ENCODE measurements at regions of chr4 and their contacts with region 1.

Region 1: DNA sequence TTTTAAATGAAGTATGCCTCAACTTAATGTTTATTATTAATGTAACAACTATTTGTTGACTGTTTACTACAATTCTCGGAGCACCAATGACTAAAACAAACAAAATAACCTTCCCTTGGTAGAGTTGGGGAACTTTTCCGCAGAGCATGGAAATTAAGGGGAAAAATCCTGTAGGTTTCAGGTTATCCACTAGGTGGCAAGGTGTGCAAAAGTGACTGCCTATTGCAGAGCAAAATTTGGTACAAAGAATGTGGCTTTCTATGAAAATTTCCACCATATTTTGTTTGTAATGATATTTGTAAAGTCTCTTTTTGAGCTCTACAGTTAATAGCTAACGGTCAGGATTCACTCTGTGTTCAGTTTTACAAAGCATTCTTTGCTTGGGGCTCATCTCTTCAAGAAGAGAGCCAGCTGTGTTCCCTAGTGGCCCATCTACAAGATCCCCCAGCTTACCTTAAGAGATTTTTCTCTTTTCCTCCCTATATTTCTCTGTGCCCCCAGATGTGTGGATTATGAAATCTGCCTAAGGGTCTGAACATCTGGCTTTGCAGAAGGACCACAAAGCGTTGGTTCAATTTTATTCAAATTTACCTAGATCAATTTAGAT is 61.1 kb downstream of the FBXO8 start:
- DNase-seq: peak; percentile 13
- ATAC-seq: peak; percentile 89
- H3K4me3 ChIP-seq: no peak overlapping the region
- H3K27ac ChIP-seq: no peak overlapping the region
- H3K4me1 ChIP-seq: no peaks in the 10 kb centered on the region
- H3K27me3 ChIP-seq: no peaks in the 10 kb centered on the region
- CTCF ChIP-seq: peak; percentile 26 to 70 (median 63); a peak in 5 of 6 replicates
- POLR2A ChIP-seq: no peak
- RAD21 ChIP-seq: peak; percentile 53

Region 2: GRCh38 chr4:174318829-174319764 is 96.7 kb after region 1 on chr4:
- CTCF ChIA-PET with region 1: interaction called, 3 read pairs
- POLR2A ChIA-PET with region 1: no interaction called
- RAD21 ChIA-PET with region 1: no interaction called
- intact Hi-C with region 1: loop called (anchors 1 kb)
- DNase-seq: peak; percentile 22
- ATAC-seq: no peak
- H3K4me3 ChIP-seq: no peak overlapping the region
- H3K27ac ChIP-seq: no peak overlapping the region
- H3K4me1 ChIP-seq: no peaks in the 10 kb centered on the region
- H3K27me3 ChIP-seq: no peaks in the 10 kb centered on the region
- CTCF ChIP-seq: peak; percentile 51 to 77 (median 51); a peak in 4 of 6 replicates
- POLR2A ChIP-seq: no peak
- RAD21 ChIP-seq: peak; percentile 68

Measured in HCT116 (cell line).